ENCODE measurements at regions of chr18 and their contacts with region 1.

Region 1: DNA sequence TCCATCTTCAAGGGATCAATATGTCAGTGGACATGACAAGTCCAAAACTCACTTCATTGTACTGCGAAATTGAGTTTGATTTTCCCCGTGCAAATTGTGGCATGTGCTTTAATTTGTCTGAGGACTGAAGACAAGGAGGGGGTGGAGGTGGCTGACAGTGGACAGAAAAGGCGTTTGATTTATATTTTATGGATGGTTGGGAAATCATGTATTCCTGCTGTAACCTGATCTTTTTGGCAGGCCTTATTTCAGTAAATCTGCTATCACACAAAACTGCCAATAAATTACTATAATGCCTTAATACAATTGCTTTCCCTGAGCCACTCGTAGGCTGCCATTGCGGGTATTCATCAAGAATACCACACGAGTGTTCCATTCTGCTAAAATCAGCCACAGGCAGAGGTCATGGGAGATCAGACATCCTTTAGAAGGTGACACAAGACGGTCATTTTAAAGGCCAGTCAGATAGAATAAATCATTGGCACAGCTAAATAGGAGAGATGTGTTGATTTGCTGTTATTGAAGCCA is 720.5 kb downstream of the MBD2 start:
- DNase-seq: no peak
- ATAC-seq: no peak
- H3K4me3 ChIP-seq: no peak overlapping the region
- H3K27ac ChIP-seq: no peak overlapping the region
- H3K4me1 ChIP-seq: no peaks in the 10 kb centered on the region
- H3K27me3 ChIP-seq: no peaks in the 10 kb centered on the region

Region 2: DNA sequence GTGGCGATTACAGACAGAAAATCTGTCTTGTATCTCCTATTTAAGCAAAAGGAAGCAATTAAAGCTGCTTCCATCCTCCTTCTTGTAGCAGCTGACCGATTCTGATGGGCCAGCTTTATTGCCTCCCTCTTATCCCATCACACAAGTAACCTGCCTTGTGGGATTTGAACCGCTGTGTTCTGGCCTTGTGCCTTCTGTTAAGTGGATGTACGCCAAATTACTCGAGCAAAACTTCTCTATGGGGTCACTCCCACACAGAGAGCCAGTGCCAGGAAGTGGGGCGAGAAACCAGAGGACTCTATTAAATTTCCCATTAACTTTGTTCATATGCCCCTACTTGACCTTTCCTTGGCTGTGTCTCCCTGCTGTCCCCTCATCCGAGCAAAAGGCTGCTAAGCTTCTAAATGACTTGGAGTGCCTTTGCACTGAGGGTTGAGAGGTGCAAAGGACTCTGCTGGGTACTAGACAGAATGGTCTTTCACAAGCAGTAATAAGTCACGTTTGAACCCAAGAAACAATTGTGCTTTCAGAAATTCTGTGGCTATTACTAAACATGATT is 48.0 kb after region 1 on chr18:
- intact Hi-C with region 1: loop called in 1 of 4 experiments (anchors 10 kb)
- DNase-seq: peak; percentile 36 to 74 (median 46)
- ATAC-seq: peak in 1 of 2 donors; percentile 91
- H3K4me3 ChIP-seq: no peak overlapping the region
- H3K27ac ChIP-seq: no peak overlapping the region
- H3K4me1 ChIP-seq: no peaks in the 10 kb centered on the region
- H3K27me3 ChIP-seq: no peaks in the 10 kb centered on the region